ENCODE measurements at regions of chr15 and their contacts with region 1.

Region 1: GRCh38 chr15:57235873-57236272 is 140.4 kb upstream of the CGNL1 start:
- DNase-seq: no peak
- ATAC-seq: no peak
- H3K4me3 ChIP-seq: no peak overlapping the region
- H3K27ac ChIP-seq: no peak overlapping the region
- H3K4me1 ChIP-seq: no peaks in the 10 kb centered on the region
- H3K27me3 ChIP-seq: no peaks in the 10 kb centered on the region
- CTCF ChIP-seq: no peak

Region 2: GRCh38 chr15:57183041-57183440 is 52.8 kb before region 1 on chr15:
- CTCF ChIA-PET with region 1: no interaction called
- POLR2A ChIA-PET with region 1: interaction called, 14 read pairs
- in situ Hi-C with region 1: no loop called
- intact Hi-C with region 1: no loop called
- DNase-seq: no peak
- ATAC-seq: no peak
- H3K4me3 ChIP-seq: no peak overlapping the region
- H3K27ac ChIP-seq: no peak overlapping the region
- H3K4me1 ChIP-seq: no peaks in the 10 kb centered on the region
- H3K27me3 ChIP-seq: no peaks in the 10 kb centered on the region
- CTCF ChIP-seq: no peak

Region 3: GRCh38 chr15:57298843-57299550 is 63.1 kb after region 1 on chr15:
- CTCF ChIA-PET with region 1: no interaction called
- POLR2A ChIA-PET with region 1: no interaction called
- in situ Hi-C with region 1: no loop called
- intact Hi-C with region 1: no loop called
- DNase-seq: no peak
- ATAC-seq: no peak
- H3K4me3 ChIP-seq: no peak overlapping the region
- H3K27ac ChIP-seq: no peak overlapping the region
- H3K4me1 ChIP-seq: no peaks in the 10 kb centered on the region
- H3K27me3 ChIP-seq: no peaks in the 10 kb centered on the region
- CTCF ChIP-seq: no peak

Measured in Panc1 (cell line).